CD4-positive, alpha-beta memory T cell (primary cell): ENCODE measurements at regions of chr9 and their contacts with region 1.

Region 1: GRCh38 chr9:105157130-105157583 is 87.3 kb upstream of the SLC44A1 start:
- DNase-seq: peak; percentile 35 to 49 (median 44)
- H3K4me3 ChIP-seq: no peak overlapping the region
- H3K4me3 Mint-ChIP-seq: no peak overlapping the region
- H3K27ac ChIP-seq: no peak overlapping the region
- H3K27ac Mint-ChIP-seq: peak overlapping the region in 1 of 7 donors; percentile 35
- H3K4me1 ChIP-seq: peaks cover 10% of the 10 kb centered on the region
- H3K4me1 Mint-ChIP-seq: peaks cover 7 to 15% (median 13%) of the 10 kb centered on the region in 4 donors
- H3K27me3 ChIP-seq: no peaks in the 10 kb centered on the region
- H3K27me3 Mint-ChIP-seq: peaks cover 0 to 1% of the 10 kb centered on the region in 2 donors

Region 2: GRCh38 chr9:104780799-104781395 is 376.3 kb before region 1 on chr9:
- CTCF ChIA-PET with region 1: no interaction called
- POLR2A ChIA-PET with region 1: no interaction called
- intact Hi-C with region 1: loop called (anchors 1 kb)
- DNase-seq: peak in 1 of 5 donors; percentile 17
- H3K4me3 ChIP-seq: no peak overlapping the region
- H3K4me3 Mint-ChIP-seq: no peak overlapping the region
- H3K27ac ChIP-seq: no peak overlapping the region
- H3K27ac Mint-ChIP-seq: no peak overlapping the region
- H3K4me1 ChIP-seq: no peaks in the 10 kb centered on the region
- H3K4me1 Mint-ChIP-seq: no peaks in the 10 kb centered on the region
- H3K27me3 ChIP-seq: no peaks in the 10 kb centered on the region
- H3K27me3 Mint-ChIP-seq: no peaks in the 10 kb centered on the region

Region 3: GRCh38 chr9:104863180-104863883 is 293.8 kb before region 1 on chr9:
- CTCF ChIA-PET with region 1: interaction called, 87 read pairs
- POLR2A ChIA-PET with region 1: no interaction called
- intact Hi-C with region 1: no loop called
- DNase-seq: peak; percentile 51 to 65 (median 60)
- H3K4me3 ChIP-seq: no peak overlapping the region
- H3K4me3 Mint-ChIP-seq: no peak overlapping the region
- H3K27ac ChIP-seq: no peak overlapping the region
- H3K27ac Mint-ChIP-seq: peak overlapping the region in 1 of 7 donors; percentile 50
- H3K4me1 ChIP-seq: no peaks in the 10 kb centered on the region
- H3K4me1 Mint-ChIP-seq: peaks cover 0 to 9% (median 3%) of the 10 kb centered on the region in 4 donors
- H3K27me3 ChIP-seq: no peaks in the 10 kb centered on the region
- H3K27me3 Mint-ChIP-seq: no peaks in the 10 kb centered on the region

Region 4: GRCh38 chr9:104968025-104968982 is 188.9 kb before region 1 on chr9:
- CTCF ChIA-PET with region 1: no interaction called
- POLR2A ChIA-PET with region 1: no interaction called
- intact Hi-C with region 1: loop called (anchors 1 kb)
- DNase-seq: peak; percentile 87 to 91 (median 89)
- H3K4me3 ChIP-seq: peak overlapping the region; percentile 78 to 88
- H3K4me3 Mint-ChIP-seq: peak overlapping the region; percentile 89 to 96 (median 94)
- H3K27ac ChIP-seq: peak overlapping the region; percentile 58
- H3K27ac Mint-ChIP-seq: peak overlapping the region; percentile 73 to 95 (median 90)
- H3K4me1 ChIP-seq: peaks cover 14% of the 10 kb centered on the region
- H3K4me1 Mint-ChIP-seq: peaks cover 2 to 17% (median 11%) of the 10 kb centered on the region in 4 donors
- H3K27me3 ChIP-seq: no peaks in the 10 kb centered on the region
- H3K27me3 Mint-ChIP-seq: peaks cover 6 to 13% of the 10 kb centered on the region in 2 donors

Region 5: DNA sequence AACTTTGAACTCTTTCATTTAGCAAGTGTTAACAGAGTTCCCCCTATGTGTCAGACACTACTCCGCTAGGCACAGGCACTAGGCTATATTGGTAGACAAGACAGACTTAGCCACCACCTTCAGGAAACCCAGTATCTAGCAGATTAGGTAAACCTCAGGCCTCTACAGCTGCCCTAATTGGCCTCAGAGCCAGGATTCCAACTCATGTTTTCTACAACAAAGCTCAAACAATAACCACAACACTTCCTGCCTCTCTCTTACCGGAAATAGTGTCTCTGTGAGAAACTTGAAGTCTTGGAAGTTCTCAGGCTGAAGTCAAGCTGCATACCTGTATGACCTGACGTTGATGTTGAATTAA is 29.3 kb before region 1 on chr9:
- CTCF ChIA-PET with region 1: no interaction called
- POLR2A ChIA-PET with region 1: no interaction called
- intact Hi-C with region 1: loop called (anchors 1 kb)
- DNase-seq: peak; percentile 84 to 91 (median 89)
- H3K4me3 ChIP-seq: no peak overlapping the region
- H3K4me3 Mint-ChIP-seq: peak overlapping the region in 7 of 8 donors; percentile 33 to 81 (median 75)
- H3K27ac ChIP-seq: no peak overlapping the region
- H3K27ac Mint-ChIP-seq: peak overlapping the region; percentile 26 to 92 (median 83)
- H3K4me1 ChIP-seq: peaks cover 47% of the 10 kb centered on the region
- H3K4me1 Mint-ChIP-seq: peaks cover 40 to 63% (median 53%) of the 10 kb centered on the region in 4 donors
- H3K27me3 ChIP-seq: no peaks in the 10 kb centered on the region
- H3K27me3 Mint-ChIP-seq: peaks cover 0 to 1% of the 10 kb centered on the region in 2 donors

Region 6: GRCh38 chr9:105299190-105299854 is 142.2 kb after region 1 on chr9:
- CTCF ChIA-PET with region 1: no interaction called
- POLR2A ChIA-PET with region 1: no interaction called
- intact Hi-C with region 1: no loop called
- DNase-seq: no peak
- H3K4me3 ChIP-seq: no peak overlapping the region
- H3K4me3 Mint-ChIP-seq: no peak overlapping the region
- H3K27ac ChIP-seq: no peak overlapping the region
- H3K27ac Mint-ChIP-seq: no peak overlapping the region
- H3K4me1 ChIP-seq: no peaks in the 10 kb centered on the region
- H3K4me1 Mint-ChIP-seq: peaks cover 0 to 7% (median 4%) of the 10 kb centered on the region in 4 donors
- H3K27me3 ChIP-seq: no peaks in the 10 kb centered on the region
- H3K27me3 Mint-ChIP-seq: no peaks in the 10 kb centered on the region